Right cardiac atrium (tissue), 5 donors: ENCODE measurements at regions of chr14 and their contacts with region 1.

Region 1: DNA sequence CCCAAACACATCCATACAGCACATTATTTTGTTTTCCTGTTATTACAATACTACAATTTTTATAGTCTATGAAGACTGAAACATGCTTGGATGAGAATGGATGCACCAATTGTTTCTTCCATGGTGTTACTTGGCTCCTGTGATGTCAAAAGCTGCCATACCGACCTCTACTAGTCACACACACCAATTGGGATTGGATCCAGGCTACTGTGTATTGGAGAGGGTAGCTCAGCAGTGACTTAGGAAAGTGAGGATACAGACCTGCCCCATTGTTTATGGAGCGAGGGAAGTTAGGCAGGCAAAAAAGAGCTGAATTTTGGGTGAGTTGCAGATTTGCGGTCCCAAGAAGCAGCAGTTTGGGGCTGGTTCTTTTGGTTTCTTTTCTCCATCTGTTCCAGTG is 30.8 kb upstream of the AKAP6 start:
- DNase-seq: no peak
- ATAC-seq: no peak
- H3K4me3 ChIP-seq: no peak overlapping the region
- H3K27ac ChIP-seq: no peak overlapping the region
- H3K4me1 ChIP-seq: peaks cover 3% of the 10 kb centered on the region
- H3K27me3 ChIP-seq: no peaks in the 10 kb centered on the region

Region 2: DNA sequence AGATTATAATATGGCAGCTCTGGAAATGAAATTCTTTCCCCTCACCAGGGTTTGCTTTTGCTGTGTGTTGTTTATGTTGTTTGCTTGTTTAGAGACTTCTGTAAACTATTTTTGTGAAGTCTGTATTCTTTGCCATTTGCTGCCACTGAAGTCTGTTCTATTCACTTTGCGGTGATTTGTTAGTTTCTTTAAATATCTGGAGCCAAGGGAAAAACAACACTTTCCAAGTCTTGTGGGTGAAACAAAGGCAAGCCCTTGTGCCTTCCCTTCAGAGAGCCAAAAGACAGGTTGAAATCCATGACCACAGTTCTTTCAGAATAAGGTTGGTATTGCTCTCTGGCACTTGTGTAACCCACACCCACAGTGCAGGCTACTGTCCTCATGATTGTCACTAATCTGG is 156.0 kb before region 1 on chr14:
- intact Hi-C with region 1: loop called in 1 of 4 experiments (anchors 5 kb)
- DNase-seq: no peak
- ATAC-seq: no peak
- H3K4me3 ChIP-seq: no peak overlapping the region
- H3K27ac ChIP-seq: no peak overlapping the region
- H3K4me1 ChIP-seq: no peaks in the 10 kb centered on the region
- H3K27me3 ChIP-seq: no peaks in the 10 kb centered on the region

Region 3: GRCh38 chr14:32417956-32418552 is 119.7 kb after region 1 on chr14:
- intact Hi-C with region 1: no loop called
- DNase-seq: peak; percentile 36 to 48 (median 41)
- ATAC-seq: peak in 1 of 2 donors; percentile 42
- H3K4me3 ChIP-seq: no peak overlapping the region
- H3K27ac ChIP-seq: peak overlapping the region; percentile 64
- H3K4me1 ChIP-seq: no peaks in the 10 kb centered on the region
- H3K27me3 ChIP-seq: no peaks in the 10 kb centered on the region